Naive thymus-derived CD4-positive, alpha-beta T cell (primary cell): ENCODE measurements at regions of chr15 and their contacts with region 1.

Region 1: GRCh38 chr15:69160141-69160993 is at the start of gene GLCE:
- DNase-seq: peak; percentile 89 to 96 (median 94)
- ATAC-seq: peak; percentile 97
- H3K4me3 ChIP-seq: peak within 1 kb of the TSS; percentile 92
- H3K4me3 Mint-ChIP-seq: peak within 1 kb of the TSS; percentile 90 to 100 (median 97)
- H3K27ac ChIP-seq: peak within 1 kb of the TSS; percentile 76
- H3K27ac Mint-ChIP-seq: peak within 1 kb of the TSS; percentile 76 to 98 (median 90)
- H3K4me1 ChIP-seq: peaks cover 5 to 7% of the 10 kb centered on the region in 2 donors
- H3K4me1 Mint-ChIP-seq: peaks cover 12 to 22% (median 18%) of the 10 kb centered on the region in 7 donors
- H3K27me3 ChIP-seq: no peaks in the 10 kb centered on the region
- H3K27me3 Mint-ChIP-seq: peaks cover 0 to 44% (median 4%) of the 10 kb centered on the region in 5 donors
- total RNA-seq, gene GLCE: 3.0 to 6.1 (median 5.4) TPM

Region 2: GRCh38 chr15:68229386-68230156 is 930.8 kb before region 1 on chr15 and contains the start of gene CLN6:
- CTCF ChIA-PET with region 1: no interaction called
- POLR2A ChIA-PET with region 1: no interaction called
- intact Hi-C with region 1: loop called in 1 of 2 experiments (anchors 10 kb)
- DNase-seq: peak; percentile 68 to 88 (median 81)
- ATAC-seq: peak; percentile 94
- H3K4me3 ChIP-seq: peak within 1 kb of the TSS; percentile 93
- H3K4me3 Mint-ChIP-seq: peak within 1 kb of the TSS; percentile 86 to 98 (median 92)
- H3K27ac ChIP-seq: peak within 1 kb of the TSS; percentile 79
- H3K27ac Mint-ChIP-seq: peak within 1 kb of the TSS; percentile 69 to 97 (median 88)
- H3K4me1 ChIP-seq: peaks cover 0 to 17% of the 10 kb centered on the region in 2 donors
- H3K4me1 Mint-ChIP-seq: peaks cover 30 to 44% (median 38%) of the 10 kb centered on the region in 7 donors
- H3K27me3 ChIP-seq: no peaks in the 10 kb centered on the region
- H3K27me3 Mint-ChIP-seq: peaks cover 0 to 3% (median 0%) of the 10 kb centered on the region in 5 donors
- total RNA-seq, gene CLN6: 15.0 to 66.6 (median 19.0) TPM

Region 3: DNA sequence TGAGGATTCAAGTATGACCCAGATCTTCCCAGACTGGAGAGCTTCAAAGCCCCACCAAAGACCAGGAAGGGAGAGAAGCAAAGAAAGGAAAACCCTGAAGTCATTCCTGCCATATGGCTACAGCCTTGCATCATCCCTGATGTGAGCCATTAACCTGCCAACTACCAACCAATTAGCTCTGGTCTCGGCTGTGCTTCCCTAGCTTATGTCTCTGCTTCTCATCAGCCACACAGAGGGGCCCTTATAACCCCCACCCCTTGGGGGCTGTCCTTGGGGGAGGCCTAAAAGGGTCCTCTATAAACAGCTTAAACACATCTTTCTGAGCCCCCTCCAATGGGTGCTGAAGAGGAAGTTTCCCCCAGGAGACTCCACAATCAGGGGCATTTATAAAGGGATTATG is 93.1 kb before region 1 on chr15:
- CTCF ChIA-PET with region 1: no interaction called
- POLR2A ChIA-PET with region 1: no interaction called
- intact Hi-C with region 1: no loop called
- DNase-seq: no peak
- ATAC-seq: no peak
- H3K4me3 ChIP-seq: no peak overlapping the region
- H3K4me3 Mint-ChIP-seq: no peak overlapping the region
- H3K27ac ChIP-seq: no peak overlapping the region
- H3K27ac Mint-ChIP-seq: no peak overlapping the region
- H3K4me1 ChIP-seq: no peaks in the 10 kb centered on the region
- H3K4me1 Mint-ChIP-seq: peaks cover 0 to 2% (median 0%) of the 10 kb centered on the region in 7 donors
- H3K27me3 ChIP-seq: no peaks in the 10 kb centered on the region
- H3K27me3 Mint-ChIP-seq: peaks cover 22 to 33% (median 28%) of the 10 kb centered on the region in 5 donors

Region 4: DNA sequence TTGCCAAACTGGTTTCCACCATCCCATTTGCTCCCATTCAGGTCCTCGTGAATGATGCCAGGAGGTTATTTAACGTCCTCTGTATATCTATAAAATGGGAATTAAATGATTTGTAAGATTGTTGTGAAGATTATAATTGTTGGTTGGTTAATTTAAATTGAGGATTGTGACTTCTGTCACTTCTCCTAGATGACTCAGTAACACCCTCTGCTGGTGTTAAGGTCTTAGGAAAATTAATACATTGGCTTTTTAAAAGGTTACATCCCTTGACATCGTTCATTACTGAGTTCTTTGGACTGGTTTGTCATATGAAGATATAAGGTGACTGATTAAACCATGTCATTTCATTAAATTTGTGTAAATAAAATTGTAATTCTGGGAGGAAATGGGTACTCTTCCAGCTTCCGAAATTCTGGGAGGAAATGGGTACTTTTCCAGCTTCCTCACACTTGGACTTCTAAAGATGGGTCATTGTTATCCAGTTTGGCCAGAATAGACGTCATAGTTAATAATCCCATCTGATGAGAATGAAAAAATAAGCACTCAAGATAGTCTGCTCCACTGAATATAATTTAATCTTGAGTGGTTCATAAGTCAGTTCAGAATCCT is 105.1 kb after region 1 on chr15:
- CTCF ChIA-PET with region 1: no interaction called
- POLR2A ChIA-PET with region 1: no interaction called
- intact Hi-C with region 1: loop called in 1 of 2 experiments (anchors 2 kb)
- DNase-seq: peak in 5 of 9 donors; percentile 3 to 7 (median 4)
- ATAC-seq: no peak
- H3K4me3 ChIP-seq: no peak overlapping the region
- H3K4me3 Mint-ChIP-seq: no peak overlapping the region
- H3K27ac ChIP-seq: no peak overlapping the region
- H3K27ac Mint-ChIP-seq: no peak overlapping the region
- H3K4me1 ChIP-seq: no peaks in the 10 kb centered on the region
- H3K4me1 Mint-ChIP-seq: no peaks in the 10 kb centered on the region
- H3K27me3 ChIP-seq: no peaks in the 10 kb centered on the region
- H3K27me3 Mint-ChIP-seq: peaks cover 0 to 3% (median 0%) of the 10 kb centered on the region in 5 donors

Region 5: GRCh38 chr15:69298697-69299441 is 138.5 kb after region 1 on chr15 and contains the start of gene PAQR5:
- CTCF ChIA-PET with region 1: no interaction called
- POLR2A ChIA-PET with region 1: no interaction called
- intact Hi-C with region 1: no loop called
- DNase-seq: no peak
- ATAC-seq: peak; percentile 53
- H3K4me3 ChIP-seq: no peak within 1 kb of the TSS
- H3K4me3 Mint-ChIP-seq: peak within 1 kb of the TSS in 8 of 10 donors; percentile 28 to 71 (median 61)
- H3K27ac ChIP-seq: no peak within 1 kb of the TSS
- H3K27ac Mint-ChIP-seq: no peak within 1 kb of the TSS
- H3K4me1 ChIP-seq: no peaks in the 10 kb centered on the region
- H3K4me1 Mint-ChIP-seq: peaks cover 0 to 10% (median 3%) of the 10 kb centered on the region in 7 donors
- H3K27me3 ChIP-seq: peaks cover 0 to 10% of the 10 kb centered on the region in 2 donors
- H3K27me3 Mint-ChIP-seq: peaks cover 51 to 75% (median 61%) of the 10 kb centered on the region in 5 donors
- total RNA-seq, gene PAQR5: 0.11 TPM in 1 of 5 experiments, not detected in the others

Region 6: DNA sequence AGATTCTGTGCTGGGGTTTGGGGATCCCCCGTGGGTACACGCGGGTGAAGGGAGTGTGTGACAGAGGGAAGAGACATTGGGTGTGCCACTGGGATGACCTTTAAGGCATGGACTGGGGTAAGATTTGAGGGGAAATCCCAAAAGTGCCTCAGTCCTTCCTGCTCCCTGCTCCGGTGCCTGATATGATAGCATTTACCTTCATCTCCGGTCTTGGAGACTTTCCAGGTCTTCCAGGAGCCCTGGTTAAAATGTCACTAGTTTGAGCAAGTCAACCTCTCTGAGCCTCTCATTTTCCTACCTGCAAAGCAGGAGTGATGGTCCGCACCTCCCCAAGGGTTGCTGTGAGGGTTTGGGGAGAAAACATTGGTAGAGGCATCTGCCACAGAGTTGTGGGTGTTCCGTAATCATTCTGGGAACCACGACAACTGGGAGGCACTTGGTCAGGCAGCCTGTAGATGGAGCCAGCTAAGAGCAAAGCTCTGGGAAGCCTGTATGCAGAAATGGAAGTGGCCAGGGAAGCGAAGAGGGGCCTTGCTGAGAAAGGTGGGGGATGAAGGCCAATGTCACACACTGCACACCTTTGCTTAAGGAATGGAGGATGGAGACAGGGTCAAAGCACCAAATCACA is 219.8 kb after region 1 on chr15:
- CTCF ChIA-PET with region 1: no interaction called
- POLR2A ChIA-PET with region 1: no interaction called
- intact Hi-C with region 1: no loop called
- DNase-seq: no peak
- ATAC-seq: no peak
- H3K4me3 ChIP-seq: no peak overlapping the region
- H3K4me3 Mint-ChIP-seq: no peak overlapping the region
- H3K27ac ChIP-seq: no peak overlapping the region
- H3K27ac Mint-ChIP-seq: no peak overlapping the region
- H3K4me1 ChIP-seq: no peaks in the 10 kb centered on the region
- H3K4me1 Mint-ChIP-seq: no peaks in the 10 kb centered on the region
- H3K27me3 ChIP-seq: no peaks in the 10 kb centered on the region
- H3K27me3 Mint-ChIP-seq: peaks cover 0 to 13% (median 7%) of the 10 kb centered on the region in 5 donors

Region 7: DNA sequence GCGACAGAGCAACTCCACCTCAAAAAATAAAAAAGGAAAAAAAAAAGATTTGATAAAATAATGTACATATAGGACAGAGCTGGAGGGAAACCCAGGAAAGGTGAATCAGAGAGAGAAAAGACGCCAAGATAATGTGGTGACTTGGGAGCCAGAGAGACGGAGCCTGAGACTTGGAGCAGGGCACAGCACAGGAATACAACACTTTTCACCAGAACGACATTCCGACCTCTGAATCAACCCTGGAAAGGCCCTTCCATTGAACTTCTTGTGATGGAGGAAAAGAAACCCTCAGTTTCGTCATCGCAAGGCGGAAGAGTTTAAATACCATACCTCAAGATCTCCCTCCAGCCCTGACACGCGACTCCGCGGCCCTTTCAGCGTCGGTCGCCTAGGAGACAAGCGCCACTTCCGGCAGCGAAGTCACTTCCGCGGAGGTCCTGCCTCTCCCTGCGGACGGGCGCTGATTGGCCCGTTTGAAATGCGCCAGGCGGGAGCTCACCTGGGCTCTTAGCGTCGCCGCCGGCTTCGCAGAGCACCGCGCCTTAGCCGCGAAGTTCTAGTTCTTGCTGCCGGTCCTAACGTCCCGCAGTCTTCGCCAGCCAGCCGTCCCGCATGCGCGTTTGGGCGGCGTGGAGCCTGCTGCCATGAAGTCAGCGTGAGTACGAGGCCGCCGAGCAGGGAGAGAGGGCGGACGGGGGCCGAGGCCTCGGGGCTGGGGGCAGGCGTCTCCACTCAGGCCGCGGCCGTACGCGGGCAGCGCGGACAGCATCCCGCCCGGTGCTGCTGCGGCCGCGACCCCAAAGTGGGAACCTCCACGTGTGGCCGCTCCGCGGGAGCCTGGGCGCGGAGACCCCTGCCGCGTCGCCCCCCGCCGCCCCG is 253.7 kb after region 1 on chr15 and contains the start of gene KIF23:
- CTCF ChIA-PET with region 1: no interaction called
- POLR2A ChIA-PET with region 1: no interaction called
- intact Hi-C with region 1: loop called (anchors 1 to 2 kb)
- DNase-seq: peak; percentile 84 to 93 (median 90)
- ATAC-seq: peak; percentile 98
- H3K4me3 ChIP-seq: peak within 1 kb of the TSS; percentile 66
- H3K4me3 Mint-ChIP-seq: peak within 1 kb of the TSS; percentile 81 to 88 (median 86)
- H3K27ac ChIP-seq: no peak within 1 kb of the TSS
- H3K27ac Mint-ChIP-seq: peak within 1 kb of the TSS in 7 of 9 donors; percentile 34 to 86 (median 78)
- H3K4me1 ChIP-seq: peaks cover 0 to 4% of the 10 kb centered on the region in 2 donors
- H3K4me1 Mint-ChIP-seq: peaks cover 0 to 36% (median 7%) of the 10 kb centered on the region in 7 donors
- H3K27me3 ChIP-seq: peaks cover 0 to 9% of the 10 kb centered on the region in 2 donors
- H3K27me3 Mint-ChIP-seq: peaks cover 8 to 22% (median 10%) of the 10 kb centered on the region in 5 donors
- total RNA-seq, gene KIF23: 0.30 to 39.4 (median 0.72) TPM in 4 of 5 experiments, not detected in the other